ENCODE measurements at regions of chr7 and their contacts with region 1.

Region 1: GRCh38 chr7:16193631-16194030 is 227.7 kb downstream of the CRPPA start:
- DNase-seq: no peak

Region 2: DNA sequence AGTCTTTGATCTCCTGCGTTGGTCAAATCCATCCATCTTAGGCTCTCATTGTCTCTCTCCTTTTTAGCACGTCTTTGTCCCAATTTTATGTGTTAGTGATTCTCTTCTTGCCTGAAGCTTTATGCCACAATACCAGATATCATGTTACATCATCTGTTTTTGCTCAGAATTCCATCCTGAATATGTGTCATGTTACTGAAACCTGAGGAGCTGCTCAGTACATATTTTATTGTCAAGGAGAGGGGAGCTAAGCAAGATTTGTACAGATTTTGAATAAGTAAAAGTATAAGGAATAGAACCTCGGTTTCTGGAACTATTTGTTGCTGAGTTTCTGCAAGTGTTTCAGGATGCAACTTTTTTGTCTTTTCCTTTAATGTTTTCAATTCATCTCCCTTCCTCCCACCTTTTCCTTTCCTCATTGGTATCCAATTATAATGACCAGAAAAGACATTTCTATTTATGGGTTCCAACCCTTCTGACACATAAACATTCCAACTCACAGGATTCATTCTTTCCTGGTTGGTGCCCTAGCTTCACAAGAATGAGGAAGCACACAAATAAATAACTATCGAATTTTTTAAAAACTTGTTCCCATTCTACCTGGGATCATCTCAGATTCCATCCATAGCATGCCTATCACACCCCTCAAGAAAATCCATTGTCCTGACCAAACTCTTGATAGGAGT is 64.1 kb before region 1 on chr7:
- intact Hi-C with region 1: loop called (anchors 10 kb)
- DNase-seq: no peak

Region 3: DNA sequence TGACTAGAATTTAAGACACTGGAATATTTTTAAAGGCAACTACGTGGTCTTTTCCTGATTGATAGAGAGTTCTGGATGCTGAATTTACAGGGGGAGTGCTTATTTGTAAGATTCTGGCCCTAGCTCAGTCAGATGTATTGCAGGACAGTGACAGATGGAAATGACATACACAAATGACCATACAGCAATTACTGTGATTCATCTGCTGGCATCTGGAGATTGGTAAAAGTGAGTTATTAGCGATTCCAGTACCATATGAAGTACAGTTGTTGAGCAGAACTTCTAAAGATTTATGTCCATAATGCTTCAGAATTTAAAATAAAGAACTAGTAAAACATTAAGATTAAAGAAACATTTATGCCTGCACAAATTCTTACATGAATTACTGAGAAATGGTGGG is 15.5 kb before region 1 on chr7:
- intact Hi-C with region 1: no loop called
- DNase-seq: no peak

Region 4: GRCh38 chr7:16212610-16213009 is 19.0 kb after region 1 on chr7:
- intact Hi-C with region 1: no loop called
- DNase-seq: no peak

Region 5: DNA sequence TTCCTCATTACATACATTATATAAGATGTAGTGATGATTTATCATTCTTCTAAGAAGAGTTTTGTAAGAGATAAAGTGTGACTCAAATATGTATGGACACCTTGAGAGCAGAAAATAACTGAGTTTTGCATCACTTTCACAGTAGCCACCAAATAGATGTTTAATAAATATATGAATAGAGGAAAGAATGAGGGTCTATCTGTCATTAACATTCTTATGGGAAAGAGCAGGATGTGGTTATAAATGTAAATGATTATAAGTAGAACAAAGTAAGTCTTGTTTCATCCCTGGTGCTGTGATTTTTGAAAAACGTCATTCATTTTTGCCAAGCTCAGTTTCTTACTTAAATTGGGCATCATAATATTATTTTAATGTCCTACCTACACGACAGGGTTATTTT is 242.7 kb after region 1 on chr7:
- intact Hi-C with region 1: no loop called
- DNase-seq: no peak

Measured in cardiac septum (tissue), 1 donor.